A673 (cell line): ENCODE measurements at regions of chr2 and their contacts with region 1.

Region 1: GRCh38 chr2:150472511-150472899 is 15.0 kb downstream of the RND3 start:
- DNase-seq: peak; percentile 37
- H3K4me3 ChIP-seq: no peak overlapping the region
- H3K27ac ChIP-seq: no peak overlapping the region
- H3K4me1 ChIP-seq: peaks cover 9% of the 10 kb centered on the region
- H3K27me3 ChIP-seq: no peaks in the 10 kb centered on the region
- CTCF ChIP-seq: no peak

Region 2: GRCh38 chr2:149568138-149568537 is 904.4 kb before region 1 on chr2:
- CTCF ChIA-PET with region 1: no interaction called
- POLR2A ChIA-PET with region 1: interaction called, 11 read pairs
- intact Hi-C with region 1: no loop called
- DNase-seq: no peak
- H3K4me3 ChIP-seq: no peak overlapping the region
- H3K27ac ChIP-seq: no peak overlapping the region
- H3K4me1 ChIP-seq: no peaks in the 10 kb centered on the region
- H3K27me3 ChIP-seq: no peaks in the 10 kb centered on the region
- CTCF ChIP-seq: no peak